ENCODE measurements at regions of chr11 and their contacts with region 1.

Region 1: DNA sequence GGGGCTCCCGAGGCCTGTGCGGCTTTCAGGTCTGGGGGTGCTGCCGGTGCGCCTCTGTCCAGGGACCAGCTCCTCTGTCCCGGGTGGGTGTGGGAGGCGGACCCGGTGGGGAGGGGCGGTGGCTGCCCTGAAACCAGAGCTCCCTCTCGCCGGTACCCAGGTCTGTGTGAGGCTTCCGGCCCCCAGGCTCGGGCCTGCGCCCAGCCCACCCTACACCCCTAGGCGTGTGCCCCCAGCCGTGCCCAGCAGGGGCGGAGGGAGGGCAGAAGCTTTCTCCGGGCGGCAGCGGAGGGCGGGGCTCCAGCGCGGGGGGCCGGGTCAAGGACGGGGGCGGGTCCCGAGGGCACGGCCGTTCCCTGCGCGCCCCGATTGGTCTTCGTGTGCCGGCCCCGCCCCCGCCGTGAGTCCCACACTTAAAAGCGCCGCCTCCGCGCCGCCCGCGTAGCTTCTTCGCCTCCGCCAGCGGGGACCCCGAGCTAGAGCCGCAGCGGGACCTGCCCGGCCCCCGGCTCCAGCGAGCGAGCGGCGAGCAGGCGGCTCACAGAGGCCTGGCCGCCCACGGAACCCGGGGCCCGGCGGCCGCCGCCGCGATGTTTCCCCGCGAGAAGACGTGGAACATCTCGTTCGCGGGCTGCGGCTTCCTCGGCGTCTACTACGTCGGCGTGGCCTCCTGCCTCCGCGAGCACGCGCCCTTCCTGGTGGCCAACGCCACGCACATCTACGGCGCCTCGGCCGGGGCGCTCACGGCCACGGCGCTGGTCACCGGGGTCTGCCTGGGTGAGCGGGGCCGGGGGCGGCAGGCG is 616 bp downstream of the PNPLA2 start:
- DNase-seq: peak; percentile 77
- ATAC-seq: peak; percentile 61
- H3K4me3 ChIP-seq: peak overlapping the region; percentile 80 to 98 (median 94)
- H3K27ac ChIP-seq: peak overlapping the region; percentile 92
- H3K4me1 ChIP-seq: peaks cover 24% of the 10 kb centered on the region
- H3K27me3 ChIP-seq: no peaks in the 10 kb centered on the region; a peak in 1 of 5 replicates
- CTCF ChIP-seq: no peak
- EP300 ChIP-seq: no peak
- POLR2A ChIP-seq: peak in 1 of 2 experiments; percentile 89; a peak in 2 of 4 replicates
- RAD21 ChIP-seq: peak; percentile 53; the same call in 1 of the 2 replicates

Region 2: DNA sequence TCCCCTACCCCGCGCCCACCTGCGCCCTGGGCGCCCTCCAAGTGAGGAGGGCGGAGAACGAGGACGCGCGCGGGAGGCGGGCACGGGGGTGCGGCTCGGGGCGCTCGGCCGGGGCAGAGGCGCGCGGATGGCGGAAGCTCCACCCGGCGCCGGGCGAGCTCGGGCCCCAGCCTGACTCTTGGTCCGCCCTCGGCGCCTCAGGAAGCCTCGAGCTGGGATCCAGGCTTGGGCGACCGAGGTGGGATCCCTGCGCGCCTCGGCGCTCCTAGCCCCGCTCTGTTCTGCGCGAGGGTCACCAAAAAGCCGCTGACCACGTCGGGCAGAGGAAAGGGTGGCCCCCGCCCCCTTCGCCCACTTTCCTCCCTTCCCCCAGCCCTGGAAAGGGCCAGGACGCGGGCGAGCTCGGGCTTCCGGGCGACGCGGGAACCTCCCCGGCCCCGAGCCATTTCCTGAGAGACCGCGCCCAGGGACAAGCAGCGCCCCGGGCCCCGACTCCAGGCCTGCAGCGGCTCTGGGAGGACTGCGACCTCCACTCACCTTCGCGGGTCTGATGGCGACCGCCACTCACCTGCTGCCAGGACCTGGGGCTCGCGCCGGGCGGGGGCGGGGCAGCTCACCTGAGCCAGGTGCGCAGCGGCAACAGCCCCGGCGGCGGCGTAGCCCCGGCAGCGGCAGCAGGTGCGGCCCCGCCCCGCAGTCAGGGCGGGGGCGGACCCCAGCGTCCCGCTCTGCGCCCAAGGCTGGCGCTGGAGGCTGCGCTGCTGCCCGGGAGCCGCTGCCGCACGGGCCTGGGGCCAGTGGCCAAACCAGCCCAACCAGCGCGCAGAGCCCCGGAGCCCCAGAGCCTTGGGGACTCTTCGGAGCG is 402.3 kb before region 1 on chr11:
- CTCF ChIA-PET with region 1: no interaction called
- POLR2A ChIA-PET with region 1: no interaction called
- in situ Hi-C with region 1: no loop called
- intact Hi-C with region 1: no loop called
- DNase-seq: no peak
- ATAC-seq: peak; percentile 28
- H3K4me3 ChIP-seq: peak overlapping the region; percentile 25 to 67 (median 57); a peak in 5 of 6 replicates
- H3K27ac ChIP-seq: no peak overlapping the region
- H3K4me1 ChIP-seq: peaks cover 39% of the 10 kb centered on the region
- H3K27me3 ChIP-seq: peaks cover 2 to 10% of the 10 kb centered on the region in 2 experiments; a peak in 1 of 5 replicates
- CTCF ChIP-seq: no peak; the same call in 1 of the 2 replicates
- EP300 ChIP-seq: no peak
- POLR2A ChIP-seq: no peak
- RAD21 ChIP-seq: no peak

Region 3: DNA sequence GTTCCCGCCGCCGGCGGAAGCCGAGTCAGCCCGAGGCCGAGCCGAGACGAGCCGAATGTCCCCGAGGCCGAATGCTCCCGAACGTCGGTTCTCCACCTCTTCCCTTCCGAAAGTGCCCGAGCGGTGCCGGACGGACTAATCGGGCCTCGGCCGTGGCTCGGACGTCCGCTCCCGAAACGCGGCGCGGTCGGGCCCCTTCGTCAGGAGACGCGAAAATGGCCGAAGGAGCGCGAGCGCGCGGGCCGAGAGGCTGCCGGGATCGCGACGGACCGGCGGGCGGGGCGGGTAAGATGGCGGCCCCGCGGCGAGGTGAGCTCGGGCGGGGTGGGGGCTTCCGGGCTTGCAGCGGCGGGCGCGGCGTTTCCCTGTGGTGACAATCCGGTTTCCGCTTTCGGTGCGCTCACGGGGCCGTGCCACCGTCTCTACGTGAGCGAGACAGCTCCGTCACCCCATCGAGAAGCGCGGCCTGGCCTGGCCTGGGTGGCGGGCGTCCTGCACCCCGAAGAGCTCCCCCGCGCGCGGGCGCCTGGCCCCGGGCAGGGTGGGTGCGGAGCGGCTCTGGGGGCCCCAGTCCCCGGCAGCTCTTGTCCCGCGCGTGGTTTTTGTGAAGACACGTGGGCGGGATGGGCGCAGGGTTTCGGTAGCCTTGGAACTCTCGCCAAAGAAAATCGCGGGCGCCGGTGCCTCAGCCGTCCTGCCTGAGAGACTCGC is 123.6 kb before region 1 on chr11 and contains the start of gene TMEM80:
- CTCF ChIA-PET with region 1: no interaction called
- POLR2A ChIA-PET with region 1: interaction called, 13 read pairs
- in situ Hi-C with region 1: no loop called
- intact Hi-C with region 1: no loop called
- DNase-seq: peak; percentile 93
- ATAC-seq: peak; percentile 84
- H3K4me3 ChIP-seq: peak within 1 kb of the TSS; percentile 86 to 87 (median 87)
- H3K27ac ChIP-seq: peak within 1 kb of the TSS; percentile 99
- H3K4me1 ChIP-seq: peaks cover 61% of the 10 kb centered on the region
- H3K27me3 ChIP-seq: no peaks in the 10 kb centered on the region; a peak in 1 of 5 replicates
- CTCF ChIP-seq: no peak; the same call in 1 of the 2 replicates
- EP300 ChIP-seq: no peak
- POLR2A ChIP-seq: peak in 1 of 2 experiments; percentile 32; a peak in 2 of 4 replicates
- RAD21 ChIP-seq: peak; percentile 43
- total RNA-seq, gene TMEM80: 2.7 and 5.6 TPM in 2 replicates

Region 4: GRCh38 chr11:798093-798713 is 21.1 kb before region 1 on chr11 and contains the start of gene SLC25A22:
- CTCF ChIA-PET with region 1: no interaction called
- POLR2A ChIA-PET with region 1: interaction called, 56 read pairs
- in situ Hi-C with region 1: no loop called
- intact Hi-C with region 1: no loop called
- DNase-seq: peak; percentile 49
- ATAC-seq: peak; percentile 52
- H3K4me3 ChIP-seq: peak within 1 kb of the TSS; percentile 70 to 97 (median 94)
- H3K27ac ChIP-seq: peak within 1 kb of the TSS; percentile 80
- H3K4me1 ChIP-seq: peaks cover 4% of the 10 kb centered on the region
- H3K27me3 ChIP-seq: no peaks in the 10 kb centered on the region; a peak in 1 of 5 replicates
- CTCF ChIP-seq: peak; percentile 78
- EP300 ChIP-seq: no peak
- POLR2A ChIP-seq: no peak
- RAD21 ChIP-seq: peak; percentile 87
- total RNA-seq, gene SLC25A22: 8.0 and 12.4 TPM in 2 replicates

Region 5: GRCh38 chr11:803770-804598 is 15.3 kb before region 1 on chr11:
- CTCF ChIA-PET with region 1: no interaction called
- POLR2A ChIA-PET with region 1: interaction called, 127 read pairs
- in situ Hi-C with region 1: no loop called
- intact Hi-C with region 1: no loop called
- DNase-seq: no peak
- ATAC-seq: peak; percentile 10
- H3K4me3 ChIP-seq: peak overlapping the region; percentile 60 to 82 (median 80)
- H3K27ac ChIP-seq: peak overlapping the region; percentile 19
- H3K4me1 ChIP-seq: peaks cover 36% of the 10 kb centered on the region
- H3K27me3 ChIP-seq: no peaks in the 10 kb centered on the region; a peak in 1 of 5 replicates
- CTCF ChIP-seq: no peak
- EP300 ChIP-seq: no peak
- POLR2A ChIP-seq: no peak
- RAD21 ChIP-seq: no peak

Region 6: DNA sequence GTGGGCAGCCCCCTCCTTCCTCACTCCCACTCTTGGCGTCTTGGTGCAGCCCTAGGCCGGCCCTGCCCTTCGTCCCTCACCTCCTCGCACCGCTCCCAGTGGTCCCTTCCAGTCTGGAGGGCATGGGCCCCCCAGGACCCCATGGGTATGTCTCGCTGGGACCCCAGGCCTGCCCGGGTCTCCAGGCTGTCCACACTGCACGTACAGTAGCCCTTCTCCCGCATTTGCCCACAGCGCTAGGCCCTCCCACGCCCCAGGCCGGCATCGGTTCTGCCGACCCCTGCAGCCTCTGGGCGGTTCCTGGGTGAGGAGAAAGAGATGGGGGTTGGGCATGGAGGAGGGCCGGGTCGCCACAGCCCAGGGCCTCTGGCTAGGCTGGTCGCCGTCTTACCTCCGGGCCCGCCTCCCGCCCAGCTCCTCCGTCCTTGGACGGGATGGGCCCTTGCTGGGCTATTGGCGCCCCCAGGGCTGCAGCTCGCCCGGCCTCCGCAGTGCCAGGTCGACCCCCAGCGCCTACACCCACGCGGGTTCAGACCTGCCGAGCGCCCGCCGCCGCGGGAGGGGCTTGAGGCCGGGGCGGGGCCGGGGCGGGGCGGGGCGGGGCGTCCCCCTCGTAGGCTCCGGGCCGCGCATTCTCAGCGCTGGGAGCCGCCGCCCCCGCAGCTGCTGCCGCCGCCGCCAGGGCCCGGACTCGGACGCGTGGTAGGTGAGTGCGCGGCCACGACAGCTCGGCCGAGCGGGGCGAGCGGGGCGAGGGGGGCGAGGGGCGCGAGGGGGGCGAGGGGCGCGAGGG is 13.2 kb after region 1 on chr11 and contains the start of gene CD151:
- CTCF ChIA-PET with region 1: no interaction called
- POLR2A ChIA-PET with region 1: interaction called, 264 read pairs
- in situ Hi-C with region 1: no loop called
- intact Hi-C with region 1: no loop called
- DNase-seq: no peak
- ATAC-seq: peak; percentile 7
- H3K4me3 ChIP-seq: peak within 1 kb of the TSS; percentile 71 to 81 (median 77)
- H3K27ac ChIP-seq: peak within 1 kb of the TSS; percentile 61
- H3K4me1 ChIP-seq: peaks cover 75% of the 10 kb centered on the region
- H3K27me3 ChIP-seq: no peaks in the 10 kb centered on the region
- CTCF ChIP-seq: no peak
- EP300 ChIP-seq: no peak
- POLR2A ChIP-seq: no peak
- RAD21 ChIP-seq: 0 out of 2 replicates have a peak, but pooled peaks have one; percentile 18
- total RNA-seq, gene CD151: 54.0 and 125 TPM in 2 replicates

Region 7: DNA sequence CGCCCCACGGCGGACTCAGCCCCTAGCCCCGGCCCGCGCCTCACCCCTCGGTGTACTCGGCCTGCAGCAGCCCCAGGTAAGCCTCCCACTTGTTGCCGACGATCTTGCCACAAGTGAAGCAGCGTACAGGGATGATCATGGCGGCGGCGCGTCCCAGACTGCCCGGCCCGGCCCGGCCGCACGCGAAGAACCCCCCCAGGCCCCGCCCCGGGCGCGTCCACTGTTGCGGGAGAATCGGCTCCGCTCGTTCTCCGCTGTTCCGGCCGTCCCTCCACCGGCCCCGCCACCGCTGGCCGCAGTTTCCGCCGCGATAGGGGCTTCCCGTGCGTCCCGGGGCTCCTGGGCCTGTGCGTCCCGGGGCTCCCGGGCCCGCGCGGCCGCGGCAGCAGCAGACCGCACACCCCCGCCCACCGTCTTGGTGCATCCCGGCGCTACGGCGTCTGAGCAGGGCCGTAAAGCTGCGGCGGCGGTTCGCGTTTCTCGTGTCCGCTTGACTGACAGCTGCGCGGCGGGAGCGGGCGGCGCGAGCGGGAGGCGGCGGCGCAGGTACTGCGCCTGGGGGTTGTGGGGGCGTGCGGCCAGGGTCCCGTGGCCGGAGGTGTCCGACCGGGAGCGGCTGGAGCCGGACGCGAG is 23.2 kb after region 1 on chr11 and contains the starts of genes POLR2L and TSPAN4:
- CTCF ChIA-PET with region 1: no interaction called
- POLR2A ChIA-PET with region 1: interaction called, 264 read pairs
- in situ Hi-C with region 1: no loop called
- intact Hi-C with region 1: no loop called
- DNase-seq: peak; percentile 78
- ATAC-seq: peak; percentile 13
- H3K4me3 ChIP-seq: peak within 1 kb of the TSS; percentile 97 to 100 (median 98)
- H3K27ac ChIP-seq: peak within 1 kb of the TSS; percentile 83
- H3K4me1 ChIP-seq: peaks cover 65% of the 10 kb centered on the region
- H3K27me3 ChIP-seq: no peaks in the 10 kb centered on the region
- CTCF ChIP-seq: no peak; the same call in 1 of the 2 replicates
- EP300 ChIP-seq: no peak
- POLR2A ChIP-seq: peak in 1 of 2 experiments; percentile 96; a peak in 2 of 4 replicates
- RAD21 ChIP-seq: peak; percentile 69
- total RNA-seq, gene POLR2L: 114 and 146 TPM in 2 replicates
- total RNA-seq, gene TSPAN4: 13.2 and 31.7 TPM in 2 replicates

Region 8: GRCh38 chr11:952406-953385 is 133.4 kb after region 1 on chr11:
- CTCF ChIA-PET with region 1: no interaction called
- POLR2A ChIA-PET with region 1: interaction called, 11 read pairs
- in situ Hi-C with region 1: no loop called
- intact Hi-C with region 1: no loop called
- DNase-seq: peak; percentile 99
- ATAC-seq: peak; percentile 98
- H3K4me3 ChIP-seq: peak overlapping the region; percentile 25 to 68 (median 50); a peak in 5 of 6 replicates
- H3K27ac ChIP-seq: peak overlapping the region; percentile 95
- H3K4me1 ChIP-seq: peaks cover 85% of the 10 kb centered on the region
- H3K27me3 ChIP-seq: no peaks in the 10 kb centered on the region
- CTCF ChIP-seq: no peak; the same call in 1 of the 2 replicates
- EP300 ChIP-seq: peak in 1 of 2 experiments; percentile 77; a peak in 2 of 4 replicates
- POLR2A ChIP-seq: peak; percentile 65 to 67; a peak in 3 of 4 replicates
- RAD21 ChIP-seq: 0 out of 2 replicates have a peak, but pooled peaks have one; percentile 20